ENCODE measurements at regions of chr17 and their contacts with region 1.

Region 1: DNA sequence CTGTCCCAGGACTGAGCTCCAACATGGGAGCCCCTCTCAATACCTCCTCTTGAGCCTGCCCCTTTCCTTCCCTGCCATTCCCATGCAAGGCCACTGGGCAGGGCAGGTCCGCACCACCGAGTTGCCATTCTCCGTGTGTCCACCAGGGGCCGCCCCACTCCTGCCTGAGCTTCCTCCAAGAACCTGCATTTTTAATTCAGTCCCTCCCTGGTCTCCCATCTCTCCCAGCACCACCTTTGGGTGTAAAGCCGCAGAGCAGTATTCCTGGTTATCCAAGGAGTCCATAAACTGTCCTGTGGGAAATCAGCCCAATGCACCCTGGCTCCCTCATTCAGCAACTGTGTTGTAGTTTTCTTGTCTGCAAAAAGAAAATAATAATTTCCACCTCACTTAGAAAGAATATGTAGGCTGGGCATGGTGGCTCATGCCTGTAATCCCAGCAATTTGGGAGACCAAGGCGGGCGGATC is 15.9 kb upstream of the ANKRD40CL start:
- DNase-seq: peak; percentile 97
- H3K4me3 ChIP-seq: no peak overlapping the region
- H3K27ac ChIP-seq: no peak overlapping the region
- H3K4me1 ChIP-seq: no peaks in the 10 kb centered on the region
- H3K27me3 ChIP-seq: no peaks in the 10 kb centered on the region
- CTCF ChIP-seq: peak; percentile 100
- EP300 ChIP-seq: no peak
- RAD21 ChIP-seq: peak; percentile 100

Region 2: DNA sequence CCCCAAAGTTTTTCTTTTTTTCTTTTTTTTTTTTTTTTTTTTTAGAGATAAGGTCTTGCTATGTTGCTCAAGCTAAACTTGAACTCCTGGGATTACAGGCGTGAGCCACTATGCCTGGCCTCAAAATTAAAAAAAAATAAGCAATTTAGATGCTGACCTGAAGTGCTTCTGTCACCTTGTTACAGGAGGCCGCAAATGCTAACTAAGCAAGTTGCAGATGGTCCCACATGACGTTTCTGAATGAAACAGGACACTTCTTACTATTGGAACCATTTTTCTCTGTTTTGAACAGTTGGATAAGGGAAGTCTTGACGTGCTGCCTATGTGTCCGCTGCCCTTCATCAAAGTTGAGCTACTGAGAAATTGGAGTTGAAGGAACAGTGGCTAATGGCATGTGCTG is 24.7 kb before region 1 on chr17:
- CTCF ChIA-PET with region 1: interaction called, 95 read pairs
- POLR2A ChIA-PET with region 1: no interaction called
- DNase-seq: no peak
- H3K4me3 ChIP-seq: no peak overlapping the region
- H3K27ac ChIP-seq: no peak overlapping the region
- H3K4me1 ChIP-seq: peaks cover 0 to under 1% of the 10 kb centered on the region in 2 experiments; a peak in 1 of 4 replicates
- H3K27me3 ChIP-seq: no peaks in the 10 kb centered on the region
- CTCF ChIP-seq: no peak
- EP300 ChIP-seq: no peak
- RAD21 ChIP-seq: no peak

Region 3: GRCh38 chr17:50798424-50799288 is 15.4 kb after region 1 on chr17:
- CTCF ChIA-PET with region 1: interaction called, 95 read pairs
- POLR2A ChIA-PET with region 1: no interaction called
- DNase-seq: no peak
- H3K4me3 ChIP-seq: no peak overlapping the region
- H3K27ac ChIP-seq: no peak overlapping the region
- H3K4me1 ChIP-seq: peaks cover 0 to 7% of the 10 kb centered on the region in 2 experiments; a peak in 1 of 4 replicates
- H3K27me3 ChIP-seq: no peaks in the 10 kb centered on the region
- CTCF ChIP-seq: no peak
- EP300 ChIP-seq: no peak
- RAD21 ChIP-seq: no peak

Region 4: DNA sequence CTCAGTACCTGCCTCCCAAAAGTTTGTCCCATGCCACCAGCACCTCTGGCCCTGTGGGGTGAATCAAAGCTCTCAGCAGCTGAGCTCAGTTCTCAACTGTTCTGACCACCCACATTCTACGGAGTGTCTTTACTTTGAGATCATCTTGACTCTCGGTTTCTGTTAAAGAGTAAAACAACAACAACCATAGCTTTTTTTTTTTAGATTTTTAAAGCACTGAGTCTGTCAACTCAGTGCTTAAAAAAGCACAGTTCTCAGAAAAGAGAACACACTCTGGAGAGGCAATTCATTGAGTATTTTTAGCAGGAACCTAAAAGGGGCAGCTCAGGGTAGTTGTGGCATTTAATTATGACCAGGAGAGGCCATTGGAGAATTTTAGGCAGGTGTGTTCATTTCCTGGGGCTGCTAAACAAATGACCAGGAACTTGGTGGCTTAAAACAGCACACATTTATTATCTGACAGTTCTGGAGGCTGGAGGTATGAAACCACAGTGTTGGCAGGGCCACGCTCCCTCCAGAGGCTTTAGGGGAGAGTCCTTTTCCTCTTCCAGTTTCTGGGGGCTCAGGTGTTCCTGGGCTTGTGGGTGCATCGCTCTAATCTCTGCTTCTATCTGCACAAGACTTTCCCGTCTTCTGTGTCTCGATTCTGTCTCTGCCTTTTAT is 45.4 kb after region 1 on chr17:
- CTCF ChIA-PET with region 1: interaction called, 100 read pairs
- POLR2A ChIA-PET with region 1: no interaction called
- DNase-seq: no peak
- H3K4me3 ChIP-seq: no peak overlapping the region
- H3K27ac ChIP-seq: no peak overlapping the region
- H3K4me1 ChIP-seq: peaks cover 0 to 4% of the 10 kb centered on the region in 2 experiments; a peak in 1 of 4 replicates
- H3K27me3 ChIP-seq: peaks cover 12% of the 10 kb centered on the region; the same call in 1 of the 2 replicates
- CTCF ChIP-seq: no peak
- EP300 ChIP-seq: no peak
- RAD21 ChIP-seq: no peak

Region 5: GRCh38 chr17:50949989-50950881 is 167.0 kb after region 1 on chr17:
- CTCF ChIA-PET with region 1: interaction called, 73 read pairs
- POLR2A ChIA-PET with region 1: interaction called, 3 read pairs
- DNase-seq: peak; percentile 86
- H3K4me3 ChIP-seq: peak overlapping the region in 1 of 2 experiments; percentile 15; a peak in 1 of 4 replicates
- H3K27ac ChIP-seq: peak overlapping the region; percentile 81 to 82
- H3K4me1 ChIP-seq: peaks cover 43 to 81% of the 10 kb centered on the region in 2 experiments
- H3K27me3 ChIP-seq: no peaks in the 10 kb centered on the region
- CTCF ChIP-seq: peak; percentile 95
- EP300 ChIP-seq: peak in 1 of 2 experiments; percentile 33; a peak in 1 of 4 replicates
- RAD21 ChIP-seq: peak; percentile 95

Region 6: DNA sequence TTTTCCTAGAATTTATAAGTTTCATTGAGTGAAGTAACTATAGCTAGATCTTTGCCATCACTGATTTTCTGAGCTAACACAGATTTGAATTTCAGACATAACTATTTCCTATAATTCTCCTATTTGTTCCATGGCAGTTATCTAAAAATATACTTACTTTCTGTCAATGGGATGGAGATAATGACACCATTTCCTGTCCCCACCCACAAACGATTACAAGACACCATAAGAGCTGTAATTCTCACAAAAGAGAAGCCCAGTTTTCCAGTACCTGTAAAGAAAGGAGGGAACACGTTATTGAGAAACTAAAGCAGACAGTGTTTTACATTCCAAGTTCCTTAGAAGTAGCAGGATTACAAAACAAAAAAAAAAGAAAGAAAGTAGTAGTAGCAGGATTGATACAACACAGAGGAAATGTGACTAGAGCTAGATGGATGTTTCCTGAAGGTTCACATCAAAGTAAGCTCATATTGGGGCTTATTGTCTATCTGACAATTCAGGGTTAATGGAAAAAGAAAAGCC is 193.8 kb after region 1 on chr17:
- CTCF ChIA-PET with region 1: interaction called, 16 read pairs
- POLR2A ChIA-PET with region 1: no interaction called
- DNase-seq: no peak
- H3K4me3 ChIP-seq: no peak overlapping the region
- H3K27ac ChIP-seq: peak overlapping the region in 1 of 2 experiments; percentile 26; a peak in 1 of 4 replicates
- H3K4me1 ChIP-seq: peaks cover 10 to 31% of the 10 kb centered on the region in 2 experiments; a peak in 3 of 4 replicates
- H3K27me3 ChIP-seq: no peaks in the 10 kb centered on the region
- CTCF ChIP-seq: no peak
- EP300 ChIP-seq: no peak
- RAD21 ChIP-seq: no peak

Region 7: GRCh38 chr17:51153210-51154072 is 370.2 kb after region 1 on chr17 and contains the start of gene NME1:
- CTCF ChIA-PET with region 1: interaction called, 13 read pairs
- POLR2A ChIA-PET with region 1: no interaction called
- DNase-seq: peak; percentile 96
- H3K4me3 ChIP-seq: peak within 1 kb of the TSS; percentile 69 to 72
- H3K27ac ChIP-seq: peak within 1 kb of the TSS; percentile 81 to 94
- H3K4me1 ChIP-seq: peaks cover 9 to 11% of the 10 kb centered on the region in 2 experiments; a peak in 3 of 4 replicates
- H3K27me3 ChIP-seq: no peaks in the 10 kb centered on the region
- CTCF ChIP-seq: peak; percentile 99
- EP300 ChIP-seq: peak; percentile 52 to 76; a peak in 3 of 4 replicates
- RAD21 ChIP-seq: peak; percentile 98
- polyA plus RNA-seq, gene NME1: 654 and 658 TPM in 2 replicates